ENCODE measurements at regions of chr5 and their contacts with region 1.

Region 1: GRCh38 chr5:151115274-151115905 is 34.6 kb upstream of the TNIP1 start:
- DNase-seq: peak; percentile 65 to 85
- ATAC-seq: peak; percentile 82 to 91
- H3K4me3 ChIP-seq: no peak overlapping the region
- H3K27ac ChIP-seq: no peak overlapping the region
- H3K4me1 ChIP-seq: no peaks in the 10 kb centered on the region
- CTCF ChIP-seq: peak; percentile 95
- EP300 ChIP-seq: no peak
- POLR2A ChIP-seq: no peak
- RAD21 ChIP-seq: peak; percentile 98 to 99

Region 2: GRCh38 chr5:151002250-151002649 is 113.1 kb before region 1 on chr5:
- CTCF ChIA-PET with region 1: interaction called, 59 read pairs
- POLR2A ChIA-PET with region 1: no interaction called
- DNase-seq: peak; percentile 24 to 33
- ATAC-seq: peak; percentile 46 to 71; a peak in 3 of 6 replicates
- H3K4me3 ChIP-seq: no peak overlapping the region
- H3K27ac ChIP-seq: no peak overlapping the region
- H3K4me1 ChIP-seq: no peaks in the 10 kb centered on the region
- CTCF ChIP-seq: peak; percentile 56
- EP300 ChIP-seq: no peak
- POLR2A ChIP-seq: no peak
- RAD21 ChIP-seq: peak; percentile 71 to 85

Region 3: GRCh38 chr5:151037561-151038411 is 77.6 kb before region 1 on chr5:
- CTCF ChIA-PET with region 1: interaction called, 66 read pairs
- POLR2A ChIA-PET with region 1: no interaction called
- DNase-seq: no peak
- ATAC-seq: no peak
- H3K4me3 ChIP-seq: no peak overlapping the region
- H3K27ac ChIP-seq: peak overlapping the region in 1 of 2 experiments; percentile 13; a peak in 1 of 6 replicates
- H3K4me1 ChIP-seq: peaks cover 39% of the 10 kb centered on the region
- CTCF ChIP-seq: no peak
- EP300 ChIP-seq: no peak
- POLR2A ChIP-seq: no peak
- RAD21 ChIP-seq: no peak

Region 4: DNA sequence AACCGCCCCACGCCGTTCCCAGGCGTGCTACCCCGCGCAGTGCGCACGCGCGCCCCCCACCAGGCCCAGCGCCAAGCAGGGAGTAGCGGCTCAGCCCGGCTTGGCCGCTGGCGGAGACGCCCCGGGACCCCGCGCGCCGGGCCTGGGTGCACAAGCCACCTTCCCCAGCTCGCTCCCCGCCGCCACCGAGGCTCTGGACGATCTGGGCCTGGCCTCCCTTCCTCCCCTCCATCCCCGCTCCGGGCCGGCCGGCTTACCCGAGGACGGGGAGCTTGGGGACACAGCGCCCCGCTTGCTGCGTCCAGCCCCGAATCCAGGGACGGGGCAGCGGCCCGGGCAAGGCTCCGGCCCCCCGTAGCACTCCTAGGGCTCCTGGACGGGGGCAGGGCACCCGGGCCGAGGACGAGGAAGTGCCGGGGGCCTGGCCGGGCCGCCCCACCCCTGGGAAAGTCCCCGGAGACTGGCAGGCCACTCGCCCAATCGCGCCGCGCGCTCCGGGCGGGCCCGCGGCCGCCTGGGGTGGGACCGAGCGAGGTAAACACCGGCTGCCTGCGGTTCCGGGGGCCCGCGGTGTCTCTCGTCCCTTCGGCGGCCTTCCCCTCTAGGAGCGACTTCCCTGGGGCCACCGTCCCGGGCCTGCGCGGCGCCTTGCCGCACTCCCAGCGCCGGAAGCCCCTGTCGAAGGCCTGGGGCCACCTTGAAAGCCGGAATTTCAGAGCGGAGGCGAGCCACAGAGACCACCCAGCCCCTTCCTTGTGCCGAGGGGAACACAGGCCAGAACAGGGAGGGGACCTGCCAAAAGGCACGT is 34.6 kb before region 1 on chr5 and contains the start of gene TNIP1:
- CTCF ChIA-PET with region 1: interaction called, 66 read pairs
- POLR2A ChIA-PET with region 1: interaction called, 4 read pairs
- DNase-seq: peak; percentile 88 to 93
- ATAC-seq: peak; percentile 79 to 90
- H3K4me3 ChIP-seq: peak within 1 kb of the TSS; percentile 67
- H3K27ac ChIP-seq: peak within 1 kb of the TSS; percentile 91 to 98
- H3K4me1 ChIP-seq: peaks cover 72% of the 10 kb centered on the region
- CTCF ChIP-seq: no peak
- EP300 ChIP-seq: no peak
- POLR2A ChIP-seq: peak; percentile 46; the same call in 1 of the 2 replicates
- RAD21 ChIP-seq: no peak
- polyA plus RNA-seq, gene TNIP1: 43.4 and 48.4 TPM in 2 replicates

Region 5: GRCh38 chr5:151126199-151126645 is 10.8 kb after region 1 on chr5:
- CTCF ChIA-PET with region 1: interaction called, 76 read pairs
- POLR2A ChIA-PET with region 1: no interaction called
- DNase-seq: peak; percentile 72 to 74
- ATAC-seq: peak; percentile 84 to 93; a peak in 5 of 6 replicates
- H3K4me3 ChIP-seq: no peak overlapping the region
- H3K27ac ChIP-seq: no peak overlapping the region
- H3K4me1 ChIP-seq: peaks cover 7% of the 10 kb centered on the region; the same call in 2 of the 3 replicates
- CTCF ChIP-seq: peak; percentile 85
- EP300 ChIP-seq: no peak
- POLR2A ChIP-seq: no peak
- RAD21 ChIP-seq: peak; percentile 74 to 78

Measured in A549 (cell line).